Astrocyte of the cerebellum (primary cell): ENCODE measurements at regions of chr2 and their contacts with region 1.

Region 1: DNA sequence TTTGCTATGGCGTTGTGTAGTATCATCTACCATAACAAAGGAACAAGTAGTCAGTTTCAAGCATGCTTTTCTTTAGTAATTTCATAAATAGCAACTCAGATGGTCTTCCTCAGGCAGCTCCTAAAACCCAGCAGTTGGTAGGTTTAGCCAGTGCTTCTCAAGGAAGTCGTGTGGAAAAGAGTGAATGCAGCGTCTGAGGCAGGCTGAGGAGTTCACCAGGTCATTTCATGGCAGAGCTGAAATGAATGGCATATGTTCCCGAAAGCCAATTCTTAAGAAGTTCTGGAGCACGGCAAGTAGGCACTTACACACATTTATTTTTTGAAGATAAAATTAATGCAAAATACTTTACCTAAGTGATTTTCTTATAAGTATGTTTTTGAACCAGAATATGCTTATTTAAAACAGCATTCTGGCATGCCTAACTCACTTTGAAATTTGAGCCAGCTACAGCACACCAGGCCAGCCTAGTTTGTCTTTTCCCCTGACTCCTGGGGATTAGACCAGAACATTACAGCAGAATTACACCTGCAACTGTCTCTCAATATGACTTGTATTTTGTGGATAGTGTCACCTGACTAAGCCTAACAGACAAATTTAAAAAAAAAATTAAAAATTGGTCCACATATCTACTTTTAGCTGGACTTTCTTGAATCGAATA is 62.2 kb downstream of the OSBPL6 start:
- DNase-seq: no peak
- H3K4me3 ChIP-seq: no peak overlapping the region
- CTCF ChIP-seq: no peak

Region 2: DNA sequence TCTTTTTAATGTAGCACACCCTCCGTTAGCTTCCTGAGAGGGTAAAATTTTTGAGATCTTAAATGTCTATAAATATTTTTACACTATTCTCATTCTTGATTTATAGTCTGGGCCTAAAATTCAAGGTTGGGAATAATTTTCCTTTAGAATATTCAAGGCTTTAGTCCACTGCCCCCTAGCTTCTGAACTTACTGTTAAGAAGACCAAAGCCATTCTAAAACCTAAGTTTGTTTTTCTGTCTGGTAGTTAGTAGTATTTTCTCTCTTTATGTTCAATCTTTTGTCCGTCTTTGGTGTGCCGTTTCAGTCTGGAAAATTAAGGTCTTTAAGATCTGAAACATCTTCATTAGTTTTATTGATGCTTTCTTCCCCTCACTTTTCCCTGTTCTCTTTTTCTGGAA is 47.7 kb before region 1 on chr2:
- in situ Hi-C with region 1: loop called (anchors 5 kb)
- DNase-seq: no peak
- H3K4me3 ChIP-seq: no peak overlapping the region
- CTCF ChIP-seq: peak; percentile 40